ENCODE measurements at regions of chr10 and their contacts with region 1.

Region 1: GRCh38 chr10:79400146-79401004 is 45.0 kb downstream of the ZCCHC24 start:
- DNase-seq: peak in 7 of 9 experiments; percentile 21 to 61 (median 49)
- ATAC-seq: peak; percentile 34
- H3K4me3 ChIP-seq: no peak overlapping the region
- H3K4me3 Mint-ChIP-seq: no peak overlapping the region
- H3K27ac ChIP-seq: no peak overlapping the region
- H3K27ac Mint-ChIP-seq: no peak overlapping the region
- H3K4me1 ChIP-seq: no peaks in the 10 kb centered on the region
- H3K4me1 Mint-ChIP-seq: no peaks in the 10 kb centered on the region
- H3K27me3 ChIP-seq: no peaks in the 10 kb centered on the region
- H3K27me3 Mint-ChIP-seq: no peaks in the 10 kb centered on the region
- CTCF ChIP-seq: peak; percentile 45

Region 2: GRCh38 chr10:79424221-79425073 is 24.1 kb after region 1 on chr10:
- CTCF ChIA-PET with region 1: no interaction called
- POLR2A ChIA-PET with region 1: no interaction called
- intact Hi-C with region 1: loop called in 1 of 2 experiments (anchors 2 kb)
- DNase-seq: no peak
- ATAC-seq: no peak
- H3K4me3 ChIP-seq: no peak overlapping the region
- H3K4me3 Mint-ChIP-seq: no peak overlapping the region
- H3K27ac ChIP-seq: no peak overlapping the region
- H3K27ac Mint-ChIP-seq: no peak overlapping the region
- H3K4me1 ChIP-seq: no peaks in the 10 kb centered on the region
- H3K4me1 Mint-ChIP-seq: no peaks in the 10 kb centered on the region
- H3K27me3 ChIP-seq: no peaks in the 10 kb centered on the region
- H3K27me3 Mint-ChIP-seq: no peaks in the 10 kb centered on the region
- CTCF ChIP-seq: no peak

Region 3: DNA sequence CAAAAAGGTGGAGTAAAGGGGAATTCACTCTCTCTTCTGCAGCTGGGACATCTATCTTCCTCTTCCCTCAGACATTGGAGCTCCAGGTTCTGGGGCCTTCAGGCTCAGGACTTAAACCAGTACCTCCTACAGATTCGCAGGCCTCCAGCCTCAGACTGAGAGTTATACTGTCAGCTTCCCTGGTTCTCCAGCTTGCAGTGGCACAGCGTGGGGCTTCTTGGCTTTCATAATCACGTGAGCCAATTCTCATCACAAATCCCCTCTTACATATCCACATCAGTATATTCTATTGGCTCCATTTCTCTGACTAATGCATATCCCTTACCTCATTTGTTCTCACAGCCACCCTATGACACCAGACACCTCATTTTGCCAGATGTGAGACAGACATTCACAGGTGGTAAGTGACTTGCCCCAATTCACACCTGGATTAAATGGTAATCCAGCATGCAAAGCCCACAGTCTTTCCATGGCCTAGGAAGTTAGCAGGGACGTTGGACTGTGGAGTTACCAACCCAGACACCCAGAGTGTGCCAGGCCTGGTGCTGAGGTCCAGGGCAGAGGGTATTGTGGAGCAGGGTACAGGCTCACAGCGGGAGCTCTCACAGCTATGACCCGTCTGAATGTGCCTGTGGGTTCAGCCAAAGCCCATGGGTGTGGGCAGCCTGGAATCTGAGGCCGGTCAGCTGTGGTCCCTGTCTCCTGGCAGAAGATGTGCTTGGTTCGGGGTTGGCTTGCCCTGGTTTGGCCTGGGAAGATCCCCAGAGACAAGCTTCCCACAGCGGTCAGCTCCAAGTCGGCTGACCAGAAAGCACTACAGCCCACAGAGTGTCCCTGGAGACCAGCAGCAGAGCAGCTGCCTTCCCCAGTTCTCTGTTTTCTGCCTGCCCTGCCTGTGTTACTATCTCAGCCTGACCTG is 63.5 kb after region 1 on chr10:
- CTCF ChIA-PET with region 1: interaction called, 9 read pairs
- POLR2A ChIA-PET with region 1: no interaction called
- intact Hi-C with region 1: loop called in 1 of 2 experiments (anchors 2 kb)
- DNase-seq: peak in 1 of 9 experiments; percentile 44
- ATAC-seq: no peak
- H3K4me3 ChIP-seq: no peak overlapping the region
- H3K4me3 Mint-ChIP-seq: no peak overlapping the region
- H3K27ac ChIP-seq: no peak overlapping the region
- H3K27ac Mint-ChIP-seq: no peak overlapping the region
- H3K4me1 ChIP-seq: no peaks in the 10 kb centered on the region
- H3K4me1 Mint-ChIP-seq: no peaks in the 10 kb centered on the region
- H3K27me3 ChIP-seq: no peaks in the 10 kb centered on the region
- H3K27me3 Mint-ChIP-seq: peaks cover 2% of the 10 kb centered on the region
- CTCF ChIP-seq: no peak

Region 4: GRCh38 chr10:79487296-79488194 is 87.2 kb after region 1 on chr10:
- CTCF ChIA-PET with region 1: no interaction called
- POLR2A ChIA-PET with region 1: no interaction called
- intact Hi-C with region 1: loop called in 1 of 2 experiments (anchors 1 kb)
- DNase-seq: peak in 4 of 9 experiments; percentile 22 to 55 (median 34)
- ATAC-seq: no peak
- H3K4me3 ChIP-seq: no peak overlapping the region
- H3K4me3 Mint-ChIP-seq: no peak overlapping the region
- H3K27ac ChIP-seq: no peak overlapping the region
- H3K27ac Mint-ChIP-seq: no peak overlapping the region
- H3K4me1 ChIP-seq: no peaks in the 10 kb centered on the region
- H3K4me1 Mint-ChIP-seq: no peaks in the 10 kb centered on the region
- H3K27me3 ChIP-seq: no peaks in the 10 kb centered on the region
- H3K27me3 Mint-ChIP-seq: no peaks in the 10 kb centered on the region
- CTCF ChIP-seq: peak; percentile 53